AG04449 (cell line): ENCODE measurements at regions of chr9 and their contacts with region 1.

Region 1: GRCh38 chr9:125558453-125559092 is 148.4 kb downstream of the MAPKAP1 start:
- DNase-seq: no peak
- H3K4me3 ChIP-seq: no peak overlapping the region
- CTCF ChIP-seq: peak; percentile 74

Region 2: DNA sequence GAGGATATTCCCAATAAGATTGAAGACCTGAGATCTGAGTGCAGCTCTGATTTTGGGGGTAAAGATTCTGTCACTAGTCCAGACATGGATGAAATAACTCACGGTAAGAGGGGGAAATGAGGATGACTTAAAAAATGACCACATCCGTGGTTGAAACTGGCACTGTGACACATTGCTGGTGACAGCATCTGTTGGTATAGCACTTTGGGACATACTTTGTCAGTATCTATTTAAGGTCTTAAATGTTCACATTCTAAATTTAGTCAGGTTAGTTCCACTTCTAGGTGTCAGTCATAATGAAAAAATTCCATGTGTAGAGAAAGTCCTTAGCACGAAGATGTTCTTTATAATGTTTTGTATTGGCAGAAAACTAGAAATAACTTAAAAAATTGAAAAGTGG is 226.0 kb before region 1 on chr9:
- CTCF ChIA-PET with region 1: no interaction called
- POLR2A ChIA-PET with region 1: no interaction called
- DNase-seq: no peak
- H3K4me3 ChIP-seq: no peak overlapping the region
- CTCF ChIP-seq: no peak

Region 3: DNA sequence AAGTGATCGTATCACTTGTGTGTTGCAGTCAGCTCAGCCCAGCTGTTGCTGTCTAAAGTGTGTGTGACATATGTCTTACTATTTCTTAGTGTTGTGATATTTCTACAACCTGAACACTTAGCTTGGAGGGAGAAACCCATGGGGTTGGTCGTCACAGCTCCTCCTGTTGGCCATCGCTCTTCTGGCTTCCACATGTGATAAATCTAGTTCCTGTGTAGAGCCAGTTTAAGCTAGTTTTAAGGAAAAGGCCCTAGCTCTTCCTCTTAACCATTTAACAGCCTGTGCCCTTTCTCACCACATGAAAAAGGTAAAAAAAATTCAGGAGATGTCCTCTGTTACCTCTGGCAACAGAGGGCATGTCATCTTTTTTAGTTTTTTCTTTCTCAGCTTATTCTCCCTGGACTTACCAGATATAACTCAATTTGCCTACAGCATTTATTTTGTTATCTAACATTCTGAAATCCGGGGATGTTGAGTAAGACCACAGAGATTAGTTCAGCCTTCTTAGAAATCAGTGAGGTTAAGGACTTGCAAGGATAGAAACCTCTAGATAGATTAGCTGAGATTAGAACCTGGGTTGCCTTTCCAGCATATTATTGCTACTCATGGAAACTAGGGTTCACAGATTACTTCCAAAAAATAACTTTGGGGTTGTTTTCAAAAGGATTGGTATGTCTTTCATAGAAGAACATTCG is 196.6 kb before region 1 on chr9:
- CTCF ChIA-PET with region 1: no interaction called
- POLR2A ChIA-PET with region 1: no interaction called
- DNase-seq: no peak
- H3K4me3 ChIP-seq: no peak overlapping the region
- CTCF ChIP-seq: peak; percentile 16

Region 4: GRCh38 chr9:125536208-125536635 is 22.4 kb before region 1 on chr9:
- CTCF ChIA-PET with region 1: interaction called, 20 read pairs
- POLR2A ChIA-PET with region 1: no interaction called
- DNase-seq: no peak
- H3K4me3 ChIP-seq: no peak overlapping the region
- CTCF ChIP-seq: no peak

Region 5: GRCh38 chr9:125568621-125569020 is 10.0 kb after region 1 on chr9:
- CTCF ChIA-PET with region 1: interaction called, 36 read pairs
- POLR2A ChIA-PET with region 1: no interaction called
- DNase-seq: no peak
- H3K4me3 ChIP-seq: no peak overlapping the region
- CTCF ChIP-seq: no peak

Region 6: GRCh38 chr9:125580701-125581286 is 22.2 kb after region 1 on chr9:
- CTCF ChIA-PET with region 1: interaction called, 14 read pairs
- POLR2A ChIA-PET with region 1: no interaction called
- DNase-seq: no peak
- H3K4me3 ChIP-seq: no peak overlapping the region
- CTCF ChIP-seq: no peak